Colonic mucosa (tissue), 4 donors: ENCODE measurements at regions of chr2 and their contacts with region 1.

Region 1: GRCh38 chr2:64644177-64645004 is 9.3 kb downstream of the SERTAD2 start:
- DNase-seq: peak; percentile 70
- H3K4me3 ChIP-seq: peak overlapping the region; percentile 10
- H3K27ac ChIP-seq: peak overlapping the region; percentile 75
- H3K4me1 ChIP-seq: peaks cover 9% of the 10 kb centered on the region
- H3K27me3 ChIP-seq: no peaks in the 10 kb centered on the region
- CTCF ChIP-seq: no peak

Region 2: GRCh38 chr2:64737547-64737946 is 93.2 kb after region 1 on chr2:
- intact Hi-C with region 1: no loop called
- DNase-seq: no peak
- H3K4me3 ChIP-seq: no peak overlapping the region
- H3K27ac ChIP-seq: no peak overlapping the region
- H3K4me1 ChIP-seq: no peaks in the 10 kb centered on the region
- H3K27me3 ChIP-seq: no peaks in the 10 kb centered on the region
- CTCF ChIP-seq: no peak

Region 3: DNA sequence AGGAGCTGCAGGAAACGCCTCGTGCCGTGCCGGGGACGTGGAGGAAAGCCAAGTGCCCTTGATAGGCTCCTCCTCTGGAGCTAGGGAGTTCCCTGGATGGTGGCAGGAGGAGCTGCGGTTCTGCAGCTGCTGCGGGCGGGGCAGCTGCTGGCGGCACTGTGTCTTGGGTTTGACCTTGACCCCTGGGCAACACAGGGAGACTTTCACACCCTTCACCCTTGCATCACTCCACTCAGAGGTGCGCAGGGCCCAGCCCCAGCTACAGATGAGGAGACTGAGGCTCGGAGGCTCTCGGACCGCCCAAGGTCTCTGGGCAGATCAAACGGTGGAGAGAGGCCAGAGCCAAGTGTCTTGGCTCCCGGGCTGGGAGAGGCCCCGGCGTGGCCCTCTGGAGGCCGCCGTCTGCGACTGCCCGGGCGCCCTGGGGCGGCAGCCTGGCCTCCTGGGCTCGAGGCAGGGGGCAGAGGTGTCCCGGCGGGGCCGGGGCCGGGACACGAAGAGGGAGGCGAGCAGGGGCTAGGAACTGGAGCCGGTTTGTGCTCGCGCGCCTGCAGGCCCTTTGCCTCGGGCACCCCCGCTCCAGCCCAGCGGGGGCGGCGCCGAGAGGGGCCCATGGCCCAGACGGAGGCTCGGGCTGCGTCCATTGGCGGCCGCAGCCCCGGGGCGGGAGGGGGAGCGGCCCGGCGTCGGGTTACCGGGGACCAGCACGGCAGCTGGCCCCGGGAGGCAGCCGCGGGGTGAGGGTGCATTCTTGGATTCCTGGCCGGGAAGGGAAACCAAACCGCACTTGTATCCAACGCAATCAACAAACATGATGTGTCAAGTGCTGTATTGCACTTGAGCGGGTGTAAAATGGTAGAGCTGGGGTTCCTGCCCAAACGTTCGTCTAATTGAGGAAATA is 215.2 kb after region 1 on chr2:
- intact Hi-C with region 1: loop called (anchors 5 kb)
- DNase-seq: peak; percentile 96
- H3K4me3 ChIP-seq: peak overlapping the region; percentile 42
- H3K27ac ChIP-seq: peak overlapping the region; percentile 95
- H3K4me1 ChIP-seq: peaks cover 4% of the 10 kb centered on the region
- H3K27me3 ChIP-seq: no peaks in the 10 kb centered on the region
- CTCF ChIP-seq: no peak